ENCODE measurements at regions of chr6 and their contacts with region 1.

Region 1: DNA sequence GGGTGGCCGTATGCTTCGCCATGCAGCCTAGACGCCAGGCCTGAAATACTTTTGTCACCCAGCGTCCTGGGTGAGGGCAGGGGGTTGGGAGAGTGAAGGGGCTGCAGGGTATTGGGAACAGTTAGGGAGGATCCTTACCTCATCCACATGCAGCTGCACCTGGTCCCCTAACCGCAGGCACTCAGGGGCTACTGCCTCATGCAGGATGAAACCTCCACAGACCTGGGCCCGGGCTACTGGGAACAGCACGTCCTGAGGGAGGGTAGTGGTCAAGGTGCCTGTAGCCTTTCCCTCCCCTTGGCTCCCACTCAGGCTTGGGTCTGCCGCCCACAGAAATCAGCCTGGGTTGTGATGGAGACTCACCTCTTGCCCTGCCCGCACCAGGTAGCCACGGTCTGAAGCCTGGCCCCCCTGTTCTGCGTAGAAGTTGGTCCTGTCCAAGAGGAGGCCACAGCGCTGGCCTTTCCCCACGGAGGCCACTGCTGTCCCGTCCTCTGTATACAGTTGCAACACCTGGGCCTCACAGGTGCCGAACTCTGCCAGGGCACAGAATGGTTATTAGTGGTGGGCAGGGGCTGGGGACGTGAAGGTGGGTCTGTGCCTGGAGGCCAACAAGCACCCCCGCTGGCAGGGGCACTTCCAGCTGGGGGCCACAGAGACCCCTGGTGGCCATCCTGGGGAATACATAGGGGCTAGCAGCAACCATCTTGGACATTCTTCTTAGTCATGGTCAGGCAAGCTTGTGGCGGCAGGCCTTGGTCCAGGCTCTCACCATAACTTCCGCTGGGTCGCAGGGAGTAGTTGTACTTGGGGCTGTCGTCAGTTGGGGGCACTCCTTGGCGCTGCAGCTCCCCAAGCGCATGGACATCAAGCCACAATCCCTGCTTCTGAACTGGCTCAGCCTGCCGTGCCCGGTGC is 8.6 kb downstream of the AARS2 start:
- DNase-seq: peak; percentile 66
- ATAC-seq: peak; percentile 88
- H3K4me3 Mint-ChIP-seq: no peak overlapping the region
- H3K27ac Mint-ChIP-seq: no peak overlapping the region; the same call in 1 of the 2 replicates
- H3K4me1 Mint-ChIP-seq: no peaks in the 10 kb centered on the region
- H3K27me3 Mint-ChIP-seq: no peaks in the 10 kb centered on the region
- CTCF ChIP-seq: peak; percentile 88

Region 2: DNA sequence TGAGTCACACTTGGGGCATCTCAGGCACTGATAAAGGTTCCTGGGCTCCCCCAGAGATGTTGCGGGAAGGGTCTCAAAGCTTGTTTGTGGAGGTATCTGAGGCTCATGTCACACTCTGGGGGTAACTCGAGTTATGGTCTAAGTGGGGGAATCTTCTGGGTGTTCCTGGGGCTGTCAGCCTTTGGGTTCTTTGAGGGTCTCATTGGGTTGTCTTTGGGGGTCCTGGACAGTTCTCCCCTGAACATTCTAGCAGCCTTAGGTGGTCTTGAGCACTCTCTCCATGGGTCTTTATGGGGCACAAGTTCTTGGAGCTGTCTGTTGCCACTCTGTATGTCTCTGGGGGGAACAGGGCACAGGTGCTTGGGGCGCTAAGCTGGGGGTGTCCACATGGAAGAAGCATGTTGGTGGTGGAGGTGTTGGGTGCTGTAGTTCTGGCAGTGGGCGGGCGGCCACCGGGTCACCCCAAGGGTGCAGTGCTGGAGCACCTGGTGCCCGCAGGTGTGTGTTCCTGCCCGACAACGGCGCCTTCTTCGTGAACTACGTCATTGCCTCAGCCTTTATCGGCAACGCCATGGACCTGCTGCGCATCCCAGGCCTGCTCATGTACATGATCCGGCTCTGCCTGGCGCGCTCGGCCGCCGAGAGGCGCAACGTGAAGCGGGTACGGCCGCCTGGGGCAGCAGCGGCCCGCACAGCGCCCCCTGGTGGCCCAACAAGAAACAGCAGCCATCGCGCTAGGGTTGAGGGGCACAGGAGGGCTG is 153.0 kb before region 1 on chr6:
- CTCF ChIA-PET with region 1: no interaction called
- POLR2A ChIA-PET with region 1: no interaction called
- DNase-seq: peak; percentile 92
- ATAC-seq: peak; percentile 81
- H3K4me3 Mint-ChIP-seq: no peak overlapping the region
- H3K27ac Mint-ChIP-seq: no peak overlapping the region
- H3K4me1 Mint-ChIP-seq: peaks cover 19% of the 10 kb centered on the region
- H3K27me3 Mint-ChIP-seq: no peaks in the 10 kb centered on the region
- CTCF ChIP-seq: peak; percentile 100

Region 3: GRCh38 chr6:44201638-44202303 is 102.8 kb before region 1 on chr6:
- CTCF ChIA-PET with region 1: no interaction called
- POLR2A ChIA-PET with region 1: no interaction called
- DNase-seq: no peak
- ATAC-seq: no peak
- H3K4me3 Mint-ChIP-seq: no peak overlapping the region
- H3K27ac Mint-ChIP-seq: peak overlapping the region; percentile 100
- H3K4me1 Mint-ChIP-seq: peaks cover 53% of the 10 kb centered on the region
- H3K27me3 Mint-ChIP-seq: no peaks in the 10 kb centered on the region; the same call in 1 of the 2 replicates
- CTCF ChIP-seq: no peak

Region 4: GRCh38 chr6:44268095-44268628 is 36.4 kb before region 1 on chr6:
- CTCF ChIA-PET with region 1: interaction called, 109 read pairs
- POLR2A ChIA-PET with region 1: no interaction called
- DNase-seq: peak; percentile 86
- ATAC-seq: peak; percentile 34
- H3K4me3 Mint-ChIP-seq: 0 out of 2 replicates have a peak overlapping the region, but pooled peaks have one; percentile 3
- H3K27ac Mint-ChIP-seq: no peak overlapping the region
- H3K4me1 Mint-ChIP-seq: peaks cover 48% of the 10 kb centered on the region
- H3K27me3 Mint-ChIP-seq: peaks cover 31% of the 10 kb centered on the region
- CTCF ChIP-seq: peak; percentile 89

Region 5: GRCh38 chr6:44275749-44276648 is 28.5 kb before region 1 on chr6:
- CTCF ChIA-PET with region 1: interaction called, 109 read pairs
- POLR2A ChIA-PET with region 1: no interaction called
- DNase-seq: peak; percentile 60
- ATAC-seq: peak; percentile 54
- H3K4me3 Mint-ChIP-seq: no peak overlapping the region
- H3K27ac Mint-ChIP-seq: no peak overlapping the region
- H3K4me1 Mint-ChIP-seq: peaks cover 16% of the 10 kb centered on the region
- H3K27me3 Mint-ChIP-seq: peaks cover 30% of the 10 kb centered on the region
- CTCF ChIP-seq: no peak

Region 6: DNA sequence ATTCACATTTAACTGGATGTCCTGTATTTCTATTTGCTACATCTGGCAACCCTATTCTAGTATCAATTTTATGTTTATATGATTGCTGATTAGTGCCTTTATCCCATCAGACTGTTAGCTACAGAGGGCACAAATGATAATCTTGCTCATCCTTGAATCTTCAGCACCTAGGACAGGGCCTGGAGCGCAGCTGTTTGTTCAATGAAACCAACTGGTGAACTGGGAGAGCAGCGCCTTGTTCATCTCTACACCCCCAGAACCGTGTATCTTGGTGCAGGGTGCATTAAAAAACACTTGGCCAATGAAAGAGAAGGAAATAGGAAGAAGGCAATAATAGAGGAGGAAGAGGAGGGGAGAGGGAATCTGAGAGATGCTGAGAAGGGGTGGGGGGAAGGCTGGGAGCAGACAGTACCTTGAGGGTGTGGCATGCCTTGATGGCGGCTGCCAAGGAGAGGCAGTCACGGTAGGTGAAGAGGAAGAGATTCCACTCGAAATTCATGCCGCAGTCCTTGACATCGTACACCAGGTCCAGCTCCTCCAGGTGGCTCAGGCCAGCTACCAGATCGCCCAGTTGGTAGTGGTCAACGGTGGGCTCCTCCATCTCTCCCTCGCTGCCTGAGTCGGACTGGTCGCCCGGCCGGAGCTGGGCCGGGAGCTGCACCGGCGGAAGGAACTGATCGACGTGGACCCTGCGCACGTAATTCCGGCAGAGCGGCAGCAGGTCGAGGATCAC is 18.8 kb before region 1 on chr6:
- CTCF ChIA-PET with region 1: interaction called, 10 read pairs
- POLR2A ChIA-PET with region 1: no interaction called
- DNase-seq: peak; percentile 57
- ATAC-seq: peak; percentile 72
- H3K4me3 Mint-ChIP-seq: no peak overlapping the region
- H3K27ac Mint-ChIP-seq: no peak overlapping the region
- H3K4me1 Mint-ChIP-seq: no peaks in the 10 kb centered on the region
- H3K27me3 Mint-ChIP-seq: peaks cover 57% of the 10 kb centered on the region
- CTCF ChIP-seq: no peak

Region 7: DNA sequence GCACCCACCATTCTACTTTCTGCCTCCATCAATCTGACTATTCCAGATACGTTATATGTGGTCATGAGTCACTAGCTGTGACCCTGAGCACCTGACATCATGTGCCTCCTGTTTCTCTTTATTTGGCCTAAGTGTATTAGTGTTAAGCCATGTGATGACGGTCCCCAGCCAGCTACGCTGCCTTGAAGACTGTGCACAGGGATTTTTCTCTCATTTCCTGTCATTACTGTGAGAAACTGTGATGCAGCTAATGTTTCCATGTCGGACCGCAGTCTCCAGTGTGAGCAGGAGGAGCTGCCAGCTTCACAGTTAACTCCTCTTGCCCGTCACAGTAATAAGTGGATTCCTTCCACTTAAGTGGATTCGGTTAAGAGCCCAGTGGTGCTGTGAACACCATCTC is 28.0 kb after region 1 on chr6:
- CTCF ChIA-PET with region 1: interaction called, 14 read pairs
- POLR2A ChIA-PET with region 1: no interaction called
- DNase-seq: no peak
- ATAC-seq: no peak
- H3K4me3 Mint-ChIP-seq: no peak overlapping the region
- H3K27ac Mint-ChIP-seq: no peak overlapping the region
- H3K4me1 Mint-ChIP-seq: peaks cover 33% of the 10 kb centered on the region
- H3K27me3 Mint-ChIP-seq: peaks cover 8% of the 10 kb centered on the region
- CTCF ChIP-seq: no peak

Region 8: GRCh38 chr6:44373787-44374186 is 69.2 kb after region 1 on chr6:
- CTCF ChIA-PET with region 1: no interaction called
- POLR2A ChIA-PET with region 1: no interaction called
- DNase-seq: no peak
- ATAC-seq: no peak
- H3K4me3 Mint-ChIP-seq: no peak overlapping the region
- H3K27ac Mint-ChIP-seq: no peak overlapping the region
- H3K4me1 Mint-ChIP-seq: no peaks in the 10 kb centered on the region
- H3K27me3 Mint-ChIP-seq: peaks cover 4% of the 10 kb centered on the region
- CTCF ChIP-seq: no peak

Measured in WTC11 (cell line).